ENCODE measurements at regions of chr19 and their contacts with region 1.

Region 1: GRCh38 chr19:10565567-10566407 is at the start of gene KRI1:
- DNase-seq: peak; percentile 100
- ATAC-seq: peak; percentile 39
- H3K4me3 Mint-ChIP-seq: peak within 1 kb of the TSS; percentile 98
- H3K27ac Mint-ChIP-seq: peak within 1 kb of the TSS; percentile 94
- H3K4me1 Mint-ChIP-seq: peaks cover 34% of the 10 kb centered on the region
- H3K27me3 Mint-ChIP-seq: no peaks in the 10 kb centered on the region
- total RNA-seq, gene KRI1: 62.5 to 67.1 TPM

Region 2: GRCh38 chr19:10106100-10106936 is 459.5 kb before region 1 on chr19 and contains the start of gene PPAN:
- CTCF ChIA-PET with region 1: no interaction called
- POLR2A ChIA-PET with region 1: no interaction called
- intact Hi-C with region 1: loop called in 1 of 2 experiments (anchors 1 kb)
- DNase-seq: peak; percentile 99
- ATAC-seq: peak; percentile 58
- H3K4me3 Mint-ChIP-seq: peak within 1 kb of the TSS; percentile 90
- H3K27ac Mint-ChIP-seq: peak within 1 kb of the TSS; percentile 99
- H3K4me1 Mint-ChIP-seq: peaks cover 67% of the 10 kb centered on the region
- H3K27me3 Mint-ChIP-seq: no peaks in the 10 kb centered on the region
- total RNA-seq, gene PPAN: 139 to 149 TPM

Region 3: DNA sequence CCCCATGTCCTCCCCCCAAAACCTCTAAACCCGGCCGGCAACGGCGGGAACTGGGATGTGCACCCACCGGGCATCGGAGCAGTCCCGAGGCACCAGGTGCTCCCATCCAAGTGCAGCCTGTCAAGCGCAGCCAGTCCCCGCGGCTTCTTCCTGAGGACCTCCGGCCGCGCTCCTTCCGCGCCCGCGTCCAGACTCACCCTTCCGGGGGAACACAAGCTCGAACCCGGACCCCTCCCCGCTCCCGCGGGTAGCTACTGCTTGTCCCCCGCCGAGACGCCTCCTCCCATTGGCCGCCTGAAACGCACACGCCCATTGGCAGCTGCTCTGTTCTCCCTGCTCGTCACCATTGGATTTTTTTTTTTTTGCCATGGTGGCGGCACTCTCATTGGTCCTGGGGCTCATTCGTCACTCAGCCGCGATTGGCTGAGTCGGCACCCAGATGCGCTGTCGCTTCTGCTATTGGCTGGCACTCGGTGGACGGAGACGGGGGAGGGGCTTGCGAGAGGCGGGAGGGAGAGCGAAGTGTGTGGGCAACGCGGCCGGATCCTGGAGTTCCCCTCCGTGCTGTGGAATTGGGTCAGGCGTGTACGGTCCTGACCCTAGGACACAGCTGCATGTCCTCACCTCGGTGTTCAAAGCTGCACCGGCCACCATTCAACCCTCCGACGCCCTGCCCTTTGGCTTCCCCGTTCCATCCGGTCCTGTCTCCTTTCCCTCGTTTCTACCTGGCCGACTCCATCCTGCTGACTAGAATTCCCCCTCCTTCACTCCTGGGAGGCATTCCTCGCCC is 185.3 kb before region 1 on chr19 and contains the start of gene TYK2:
- CTCF ChIA-PET with region 1: no interaction called
- POLR2A ChIA-PET with region 1: no interaction called
- intact Hi-C with region 1: loop called in 1 of 2 experiments (anchors 1 kb)
- DNase-seq: peak; percentile 97
- ATAC-seq: peak; percentile 99
- H3K4me3 Mint-ChIP-seq: peak within 1 kb of the TSS; percentile 86
- H3K27ac Mint-ChIP-seq: peak within 1 kb of the TSS; percentile 96
- H3K4me1 Mint-ChIP-seq: peaks cover 22% of the 10 kb centered on the region
- H3K27me3 Mint-ChIP-seq: no peaks in the 10 kb centered on the region
- total RNA-seq, gene TYK2: 151 to 197 TPM

Region 4: GRCh38 chr19:10543420-10544241 is 22.2 kb before region 1 on chr19 and contains the start of gene ATG4D:
- CTCF ChIA-PET with region 1: interaction called, 6 read pairs
- POLR2A ChIA-PET with region 1: interaction called, 3 read pairs
- intact Hi-C with region 1: loop called (anchors 1 to 2 kb)
- DNase-seq: peak; percentile 89
- ATAC-seq: peak; percentile 85
- H3K4me3 Mint-ChIP-seq: peak within 1 kb of the TSS; percentile 85
- H3K27ac Mint-ChIP-seq: peak within 1 kb of the TSS; percentile 84
- H3K4me1 Mint-ChIP-seq: peaks cover 14% of the 10 kb centered on the region
- H3K27me3 Mint-ChIP-seq: peaks cover 8% of the 10 kb centered on the region
- total RNA-seq, gene ATG4D: 18.9 to 19.3 TPM

Region 5: DNA sequence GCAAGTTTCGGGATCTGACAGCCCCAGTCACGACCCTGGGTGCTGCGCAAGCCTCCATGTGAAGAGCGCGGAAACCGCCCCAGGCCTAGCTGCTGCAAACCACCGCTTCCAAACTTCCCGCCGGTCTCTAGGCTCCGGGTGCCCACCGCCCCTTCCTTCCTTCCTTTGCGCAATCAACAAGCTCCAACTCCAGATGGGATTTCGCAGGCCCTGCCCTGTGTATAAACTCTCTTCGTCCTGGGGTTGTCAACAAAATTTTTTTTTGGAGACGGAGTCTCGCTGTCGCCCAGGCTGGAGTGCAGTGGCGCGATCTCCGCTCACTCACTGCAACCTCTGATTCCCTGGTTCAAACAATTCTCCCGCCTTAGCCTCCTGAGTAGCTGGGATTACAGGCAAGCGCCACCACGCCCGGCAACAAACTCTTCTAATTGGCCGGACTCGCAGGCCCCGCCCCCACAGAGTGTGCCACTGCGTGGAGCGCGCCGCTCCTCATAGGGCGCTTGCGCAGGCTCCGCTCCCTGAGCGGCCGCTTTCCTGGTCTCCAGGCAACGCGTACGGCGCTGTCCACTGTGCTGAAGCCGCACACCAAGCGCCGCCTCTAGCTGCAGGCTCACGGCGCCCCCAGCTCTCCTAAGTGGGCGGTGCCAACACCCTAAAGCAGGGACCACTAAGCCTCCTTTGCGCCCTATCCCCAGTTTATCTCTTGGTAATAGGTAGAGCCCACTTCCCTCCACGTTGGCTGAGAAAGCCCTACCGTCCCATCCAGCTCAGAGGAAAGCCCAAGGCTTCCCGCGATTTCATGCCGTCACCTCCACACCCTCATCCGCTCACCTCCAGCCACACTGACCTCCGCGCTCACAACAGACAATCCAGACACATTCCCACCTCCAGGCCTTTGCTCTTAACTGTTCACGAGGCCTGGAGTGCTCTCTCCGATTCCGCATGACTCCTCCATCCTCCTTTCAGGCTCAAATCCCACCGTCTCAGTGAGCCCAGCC is 129.9 kb after region 1 on chr19:
- CTCF ChIA-PET with region 1: interaction called, 7 read pairs
- POLR2A ChIA-PET with region 1: no interaction called
- intact Hi-C with region 1: loop called (anchors 1 to 5 kb)
- DNase-seq: peak; percentile 95
- ATAC-seq: peak; percentile 99
- H3K4me3 Mint-ChIP-seq: peak overlapping the region; percentile 59
- H3K27ac Mint-ChIP-seq: no peak overlapping the region
- H3K4me1 Mint-ChIP-seq: peaks cover 13% of the 10 kb centered on the region
- H3K27me3 Mint-ChIP-seq: no peaks in the 10 kb centered on the region

Region 6: DNA sequence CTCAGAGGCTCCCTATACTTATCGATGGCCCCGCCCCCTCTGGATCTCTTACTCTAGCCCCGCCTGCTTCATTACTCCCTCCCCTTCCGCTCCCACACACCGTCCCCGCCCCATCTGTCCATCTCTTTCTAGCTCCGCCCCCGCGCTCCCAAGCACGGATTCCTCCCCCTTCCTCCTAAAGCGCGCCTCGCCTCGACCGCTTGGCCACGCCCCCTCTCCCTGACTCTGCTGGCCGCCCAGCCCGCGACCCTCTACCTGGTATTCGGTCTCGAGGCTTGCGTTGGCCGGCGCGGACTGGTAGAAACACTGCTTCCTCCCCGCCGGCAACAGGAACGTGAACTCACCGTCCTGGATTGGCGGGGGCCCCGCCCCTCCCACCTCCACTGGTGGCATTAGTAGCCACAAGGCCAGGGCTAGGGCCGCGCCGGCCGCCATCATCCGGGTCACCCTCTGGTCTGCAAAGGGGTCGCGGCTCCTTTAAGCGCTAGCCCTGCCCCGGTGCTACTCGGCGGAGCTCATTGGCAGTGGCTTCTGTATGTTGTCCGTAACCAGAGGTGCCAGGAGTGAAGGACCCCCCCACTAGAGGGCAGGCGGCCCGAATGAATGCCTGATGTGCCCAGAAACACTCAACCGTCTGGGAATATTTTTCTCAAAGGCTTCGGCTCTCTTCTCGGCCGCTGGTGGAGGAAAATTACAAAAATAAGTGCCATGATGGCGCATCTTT is 270.1 kb after region 1 on chr19 and contains the start of gene TMED1:
- CTCF ChIA-PET with region 1: interaction called, 3 read pairs
- POLR2A ChIA-PET with region 1: no interaction called
- intact Hi-C with region 1: loop called in 1 of 2 experiments (anchors 1 kb)
- DNase-seq: peak; percentile 99
- ATAC-seq: peak; percentile 93
- H3K4me3 Mint-ChIP-seq: peak within 1 kb of the TSS; percentile 94
- H3K27ac Mint-ChIP-seq: peak within 1 kb of the TSS; percentile 99
- H3K4me1 Mint-ChIP-seq: peaks cover 15% of the 10 kb centered on the region
- H3K27me3 Mint-ChIP-seq: no peaks in the 10 kb centered on the region
- total RNA-seq, gene TMED1: 8.7 to 15.3 TPM

Region 7: DNA sequence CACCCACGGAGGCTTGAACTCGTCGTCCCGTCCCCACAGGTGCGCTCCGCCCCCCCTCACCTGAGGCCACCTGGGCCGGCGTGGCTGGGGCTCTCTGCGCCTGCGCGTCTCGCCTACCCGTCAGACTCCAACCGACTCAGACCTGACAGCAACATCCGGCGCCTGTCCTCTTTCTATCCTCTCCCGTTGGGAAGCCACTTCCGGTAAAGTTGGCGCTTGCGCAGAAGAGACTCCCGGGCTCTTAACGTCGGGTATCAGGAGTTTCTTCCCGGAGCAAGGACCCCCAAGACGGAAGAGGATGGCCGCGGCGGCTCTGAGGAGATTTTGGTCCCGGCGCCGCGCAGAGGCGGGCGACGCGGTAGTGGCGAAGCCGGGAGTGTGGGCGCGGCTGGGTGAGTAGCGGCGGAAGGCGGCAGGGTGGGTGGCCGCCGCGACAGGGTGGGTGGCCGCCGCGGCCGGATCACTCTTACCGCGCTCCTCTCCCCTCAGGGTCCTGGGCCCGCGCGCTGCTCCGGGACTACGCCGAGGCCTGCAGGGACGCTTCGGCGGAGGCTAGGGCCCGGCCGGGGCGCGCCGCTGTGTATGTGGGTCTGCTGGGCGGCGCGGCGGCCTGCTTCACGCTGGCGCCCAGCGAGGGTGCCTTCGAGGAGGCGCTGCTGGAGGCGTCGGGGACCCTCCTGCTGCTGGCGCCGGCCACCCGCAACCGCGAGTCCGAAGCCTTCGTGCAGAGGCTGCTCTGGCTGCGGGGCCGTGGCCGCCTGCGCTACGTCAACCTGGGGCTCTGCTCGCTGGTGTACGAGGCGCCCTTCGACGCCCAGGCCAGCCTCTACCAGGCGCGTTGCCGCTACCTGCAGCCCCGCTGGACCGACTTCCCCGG is 363.0 kb after region 1 on chr19 and contains the starts of genes TIMM29 and YIPF2:
- CTCF ChIA-PET with region 1: no interaction called
- POLR2A ChIA-PET with region 1: no interaction called
- intact Hi-C with region 1: no loop called
- DNase-seq: peak; percentile 97
- ATAC-seq: peak; percentile 96
- H3K4me3 Mint-ChIP-seq: peak within 1 kb of the TSS; percentile 90
- H3K27ac Mint-ChIP-seq: peak within 1 kb of the TSS; percentile 79
- H3K4me1 Mint-ChIP-seq: peaks cover 21% of the 10 kb centered on the region
- H3K27me3 Mint-ChIP-seq: no peaks in the 10 kb centered on the region
- total RNA-seq, gene TIMM29: 8.6 to 15.5 TPM
- total RNA-seq, gene YIPF2: 15.8 to 21.3 TPM